Motor neuron (in vitro differentiated cells): ENCODE measurements at regions of chr7 and their contacts with region 1.

Region 1: DNA sequence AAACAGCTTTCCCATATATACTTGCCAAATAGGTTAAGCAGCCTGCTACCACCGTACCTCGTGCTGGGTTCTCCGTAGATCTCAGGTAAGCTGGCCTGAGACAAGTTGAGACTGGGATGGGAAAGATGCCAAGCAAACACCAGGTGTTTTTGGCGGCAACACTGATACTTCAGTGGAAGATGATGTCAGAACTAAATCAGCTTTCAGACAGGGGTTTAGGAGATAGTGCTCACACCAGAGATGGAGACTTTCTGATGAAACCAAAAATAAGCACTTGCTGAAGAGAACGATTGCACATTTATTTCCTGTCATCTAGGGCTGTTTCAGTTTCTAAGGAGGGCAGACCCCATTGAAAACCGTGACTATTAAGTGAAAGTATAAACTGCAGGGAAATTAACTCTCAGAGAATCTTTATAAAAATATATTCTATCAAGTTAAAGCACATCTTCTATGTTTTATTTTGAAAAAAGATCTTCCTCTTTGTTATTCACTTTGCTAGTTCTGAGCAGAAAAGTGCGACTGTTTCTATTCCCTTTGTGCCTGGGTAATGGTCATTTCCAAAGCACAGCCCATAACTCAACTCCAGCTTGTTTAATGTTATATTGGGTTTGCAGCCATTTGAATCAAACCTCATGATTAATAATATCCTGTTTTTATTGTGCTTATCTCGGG is 149.9 kb downstream of the CPED1 start:
- ATAC-seq: peak in 5 of 8 experiments; percentile 55 to 99 (median 93)
- H3K4me3 ChIP-seq: peak overlapping the region in 2 of 5 donors; percentile 5 to 25
- H3K27ac ChIP-seq: peak overlapping the region in 1 of 2 donors; percentile 56
- H3K4me1 ChIP-seq: peaks cover 0 to 20% of the 10 kb centered on the region in 2 donors

Region 2: DNA sequence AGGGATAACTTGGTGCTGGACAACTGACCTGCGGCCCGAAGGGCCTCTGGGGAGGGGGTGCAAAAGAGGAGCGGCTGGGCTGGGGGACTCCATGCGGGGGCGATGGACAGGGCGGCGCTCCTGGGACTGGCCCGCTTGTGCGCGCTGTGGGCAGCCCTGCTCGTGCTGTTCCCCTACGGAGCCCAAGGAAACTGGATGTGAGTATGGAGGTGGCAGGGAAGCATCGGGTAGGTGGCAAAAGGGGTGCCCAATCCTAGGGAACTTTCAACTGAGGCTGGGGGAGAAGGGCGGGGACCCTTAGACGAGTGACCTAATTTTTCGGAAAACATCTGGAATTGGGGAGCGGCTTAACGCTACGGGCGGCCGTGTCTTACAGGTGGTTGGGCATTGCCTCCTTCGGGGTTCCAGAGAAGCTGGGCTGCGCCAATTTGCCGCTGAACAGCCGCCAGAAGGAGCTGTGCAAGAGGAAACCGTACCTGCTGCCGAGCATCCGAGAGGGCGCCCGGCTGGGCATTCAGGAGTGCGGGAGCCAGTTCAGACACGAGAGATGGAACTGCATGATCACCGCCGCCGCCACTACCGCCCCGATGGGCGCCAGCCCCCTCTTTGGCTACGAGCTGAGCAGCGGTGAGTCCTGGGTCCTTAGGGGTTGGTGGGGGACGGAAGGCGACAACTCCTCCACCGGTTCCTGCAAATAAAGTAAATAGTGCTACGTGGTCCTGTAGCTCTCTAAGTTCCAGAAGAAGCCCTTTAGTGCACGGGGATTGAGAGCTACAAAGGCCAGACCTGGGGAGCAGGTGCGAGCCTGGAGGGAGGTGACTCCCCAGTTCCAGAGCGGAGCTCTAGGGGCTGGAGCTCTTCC is 191.0 kb after region 1 on chr7:
- in situ Hi-C with region 1: loop called in 2 of 9 experiments (anchors 25 kb)
- ATAC-seq: peak; percentile 22 to 81 (median 50)
- H3K4me3 ChIP-seq: peak overlapping the region; percentile 14 to 42 (median 31)
- H3K27ac ChIP-seq: no peak overlapping the region
- H3K4me1 ChIP-seq: peaks cover 0 to 6% of the 10 kb centered on the region in 2 donors

Region 3: GRCh38 chr7:121547544-121548092 is 409.2 kb after region 1 on chr7:
- in situ Hi-C with region 1: loop called in 1 of 9 experiments (anchors 25 kb)
- ATAC-seq: peak in 7 of 8 experiments; percentile 65 to 90 (median 78)
- H3K4me3 ChIP-seq: no peak overlapping the region
- H3K27ac ChIP-seq: no peak overlapping the region
- H3K4me1 ChIP-seq: no peaks in the 10 kb centered on the region